Activated CD4-positive, alpha-beta T cell treated with anti-CD3 and anti-CD28 coated beads, Interleukin-2, amount 10 ng/mL, durations not matched to agents 24 days and 14 days (primary cell): ENCODE measurements at regions of chr2 and their contacts with region 1.

Region 1: DNA sequence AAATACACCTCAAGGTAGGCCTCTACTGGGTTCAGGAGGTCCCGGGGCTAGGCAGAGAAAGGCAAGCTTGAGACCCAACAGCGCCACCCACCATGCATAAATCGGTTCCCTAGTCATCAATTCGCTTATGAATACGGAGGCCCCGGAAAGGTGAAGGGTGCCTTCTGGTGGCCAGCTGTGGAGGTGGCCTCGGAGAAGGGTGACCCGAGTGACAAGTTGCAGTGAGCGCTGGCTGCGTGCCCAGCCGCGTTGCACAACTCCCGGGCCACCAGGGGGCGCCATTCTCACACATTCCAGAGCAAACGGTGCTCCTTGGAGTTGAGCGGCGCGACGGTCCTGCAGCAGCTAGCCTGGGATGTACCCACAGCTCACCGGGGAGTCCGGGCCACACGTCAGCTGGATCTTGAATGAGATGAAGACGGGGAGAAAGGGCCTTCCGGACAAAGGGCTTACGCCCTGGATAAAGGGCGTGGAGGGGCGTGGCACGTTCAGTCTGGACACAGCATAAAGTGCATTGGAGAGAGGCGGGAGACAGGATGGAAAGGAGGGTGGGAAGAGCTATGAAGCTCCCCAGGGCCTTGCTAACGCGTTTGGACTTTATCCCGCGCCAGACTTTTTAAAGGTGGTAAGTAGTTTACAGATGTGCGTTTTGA is 20.4 kb downstream of the TMSB10 start:
- DNase-seq: peak; percentile 99
- H3K4me3 Mint-ChIP-seq: peak overlapping the region; percentile 93
- H3K27ac Mint-ChIP-seq: peak overlapping the region; percentile 93
- H3K4me1 Mint-ChIP-seq: peaks cover 37% of the 10 kb centered on the region
- H3K27me3 Mint-ChIP-seq: no peaks in the 10 kb centered on the region

Region 2: DNA sequence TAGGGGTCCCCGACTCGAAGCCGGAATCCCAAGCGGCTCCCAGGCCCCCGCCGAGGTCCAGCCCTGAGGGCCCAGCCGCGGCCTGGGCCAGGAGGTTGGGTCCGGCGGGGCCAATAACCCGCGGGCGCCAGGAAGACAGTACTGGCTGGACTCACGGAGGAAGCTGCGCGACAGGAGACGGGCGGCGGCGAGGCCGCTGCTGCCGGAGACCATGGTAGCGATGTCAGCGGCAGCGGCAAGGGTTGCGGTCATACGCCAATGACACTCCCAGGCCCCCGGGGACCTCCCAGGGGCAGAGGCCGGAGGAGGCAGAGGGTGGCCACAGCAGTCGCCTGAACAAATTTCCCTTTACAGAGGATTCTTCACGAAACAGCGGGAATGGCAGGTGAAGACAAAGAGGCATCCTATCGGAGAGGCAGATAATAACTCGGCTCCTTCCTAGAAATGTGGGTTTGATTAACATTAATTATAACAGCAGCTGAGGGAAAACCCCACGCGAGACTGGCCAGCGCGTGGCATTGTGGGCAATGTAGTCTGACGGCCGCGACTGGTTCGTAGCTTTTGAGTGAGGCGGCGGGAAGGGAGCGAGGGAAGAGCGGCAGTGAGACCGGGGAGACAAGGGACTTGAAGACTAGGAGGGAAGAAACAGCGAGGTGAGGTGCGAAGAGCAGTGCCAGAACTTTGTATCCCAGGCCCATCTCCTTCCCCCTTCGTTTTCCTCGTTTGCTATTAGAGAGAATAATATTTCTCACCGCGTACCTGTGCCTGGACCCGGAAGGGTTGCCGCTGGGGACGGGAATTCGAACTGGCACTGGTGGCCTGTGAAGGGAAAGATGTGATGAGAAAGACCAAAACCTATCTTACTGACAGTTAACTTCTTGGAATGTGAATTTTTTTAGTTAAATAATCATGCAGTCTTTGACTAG is 466.6 kb before region 1 on chr2 and contains the start of gene SUCLG1:
- intact Hi-C with region 1: loop called (anchors 2 kb)
- DNase-seq: peak; percentile 96
- H3K4me3 Mint-ChIP-seq: peak within 1 kb of the TSS; percentile 94
- H3K27ac Mint-ChIP-seq: peak within 1 kb of the TSS; percentile 97
- H3K4me1 Mint-ChIP-seq: peaks cover 33% of the 10 kb centered on the region
- H3K27me3 Mint-ChIP-seq: no peaks in the 10 kb centered on the region
- total RNA-seq, gene SUCLG1: 71.9 and 72.6 TPM in 2 replicates

Region 3: DNA sequence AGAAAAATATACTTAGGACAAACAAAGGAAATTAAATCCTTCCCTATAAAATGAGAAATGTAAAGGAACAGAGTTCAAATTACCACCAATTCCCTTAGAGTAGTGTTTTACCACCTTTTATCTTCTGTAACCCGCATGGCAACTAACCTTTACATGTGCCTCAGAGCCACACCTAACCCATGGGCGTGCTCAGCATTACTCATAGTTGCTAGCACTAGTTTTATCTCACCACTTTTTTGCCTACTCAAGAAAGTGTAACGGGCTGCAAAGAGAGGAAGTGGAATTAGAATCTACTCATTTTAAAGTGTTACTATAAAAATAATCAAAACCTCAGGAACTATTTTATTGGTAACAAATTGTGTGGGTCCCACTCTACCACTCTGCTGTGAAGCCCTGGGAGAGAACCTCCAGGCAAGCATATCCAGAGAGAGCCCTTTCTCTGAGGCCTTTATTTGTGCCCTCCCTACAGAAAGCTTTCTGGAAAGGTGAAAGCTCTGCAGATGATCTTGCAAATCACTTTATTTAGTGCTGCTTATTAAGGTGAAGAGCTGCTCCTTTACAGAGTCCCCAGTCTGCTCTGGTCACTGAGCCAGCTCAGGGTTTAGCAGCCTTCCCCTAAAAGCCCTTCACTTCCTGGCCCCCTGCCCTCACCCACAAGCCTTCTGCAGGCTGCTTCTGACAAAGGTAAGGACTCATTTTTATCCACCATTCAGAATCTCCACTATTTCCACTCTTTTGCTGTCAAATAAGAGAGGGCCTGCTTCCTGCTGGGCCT is 143.7 kb before region 1 on chr2:
- intact Hi-C with region 1: loop called (anchors 2 kb)
- DNase-seq: peak; percentile 86
- H3K4me3 Mint-ChIP-seq: peak overlapping the region; percentile 50
- H3K27ac Mint-ChIP-seq: peak overlapping the region; percentile 90
- H3K4me1 Mint-ChIP-seq: peaks cover 57% of the 10 kb centered on the region
- H3K27me3 Mint-ChIP-seq: no peaks in the 10 kb centered on the region

Region 4: GRCh38 chr2:84846041-84846663 is 79.7 kb before region 1 on chr2:
- intact Hi-C with region 1: loop called (anchors 2 kb)
- DNase-seq: peak; percentile 88
- H3K4me3 Mint-ChIP-seq: peak overlapping the region; percentile 70
- H3K27ac Mint-ChIP-seq: peak overlapping the region; percentile 92
- H3K4me1 Mint-ChIP-seq: peaks cover 84% of the 10 kb centered on the region
- H3K27me3 Mint-ChIP-seq: no peaks in the 10 kb centered on the region

Region 5: DNA sequence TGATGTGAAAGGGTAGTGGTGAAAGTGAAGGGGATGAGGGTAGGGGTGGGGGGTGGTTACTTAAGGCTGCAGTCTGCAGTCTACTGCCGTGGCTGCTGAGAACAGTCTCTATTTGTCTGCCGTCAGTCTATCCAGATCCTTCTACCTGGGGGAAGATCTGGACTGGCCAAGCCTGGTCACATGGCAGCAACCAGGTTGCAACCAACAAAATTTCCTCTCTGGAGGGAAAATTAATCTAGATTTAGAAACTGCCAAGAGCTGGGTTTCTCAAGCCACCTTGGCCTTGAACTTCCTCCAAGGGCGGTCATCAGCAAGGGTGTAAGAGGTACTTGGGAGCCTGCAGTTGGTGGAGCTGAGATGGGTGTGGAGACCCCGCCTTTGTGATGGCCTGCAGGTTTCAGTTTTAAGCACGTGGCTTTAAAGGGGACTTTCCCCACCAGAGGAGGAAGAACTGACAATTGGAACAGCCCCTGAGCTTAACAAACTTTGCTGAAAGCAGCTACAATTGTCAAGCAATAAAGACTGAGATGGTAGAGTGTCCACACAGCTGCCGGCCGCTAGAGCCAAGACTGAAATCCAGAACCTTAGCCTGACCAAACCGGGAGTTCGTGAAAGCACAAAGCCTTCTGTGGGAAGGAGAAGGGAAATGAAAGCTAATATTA is 13.7 kb after region 1 on chr2:
- intact Hi-C with region 1: loop called (anchors 1 kb)
- DNase-seq: peak; percentile 95
- H3K4me3 Mint-ChIP-seq: peak overlapping the region; percentile 84
- H3K27ac Mint-ChIP-seq: peak overlapping the region; percentile 98
- H3K4me1 Mint-ChIP-seq: peaks cover 45% of the 10 kb centered on the region
- H3K27me3 Mint-ChIP-seq: no peaks in the 10 kb centered on the region

Region 6: DNA sequence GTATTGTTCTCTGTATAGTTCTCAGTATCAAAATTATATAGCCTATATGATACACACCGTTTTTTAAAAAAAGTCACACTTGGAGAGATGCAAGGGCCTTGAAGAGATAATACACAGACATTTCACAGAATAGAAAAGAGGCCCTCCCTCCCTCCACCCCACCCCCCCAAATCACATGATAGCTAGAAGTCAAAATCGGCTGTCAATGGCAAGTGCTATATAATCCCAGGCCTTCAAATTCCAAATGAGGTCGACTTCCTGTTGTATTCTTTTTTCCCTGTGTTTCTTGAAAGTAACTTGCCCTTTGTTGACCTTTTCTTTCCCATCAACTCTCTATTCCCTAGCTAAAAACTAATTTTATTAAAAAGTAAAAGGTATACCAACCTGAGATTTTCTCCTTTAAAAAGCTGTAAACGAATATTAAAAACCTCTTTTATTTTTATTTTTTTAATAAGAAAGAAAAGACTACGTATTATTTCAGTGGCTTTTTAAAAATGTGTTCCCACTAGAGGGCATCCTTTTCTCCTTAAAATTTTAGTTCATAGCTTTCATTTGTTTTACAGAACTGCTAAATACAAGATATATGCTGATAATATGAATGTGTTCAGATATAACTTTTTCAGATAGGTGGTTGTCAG is 91.7 kb after region 1 on chr2:
- intact Hi-C with region 1: loop called (anchors 1 kb)
- DNase-seq: no peak
- H3K4me3 Mint-ChIP-seq: no peak overlapping the region
- H3K27ac Mint-ChIP-seq: peak overlapping the region; percentile 83
- H3K4me1 Mint-ChIP-seq: peaks cover 48% of the 10 kb centered on the region
- H3K27me3 Mint-ChIP-seq: no peaks in the 10 kb centered on the region